Dorsolateral prefrontal cortex (tissue), 120 donors: ENCODE measurements at regions of chr11 and their contacts with region 1.

Region 1: GRCh38 chr11:83193315-83194280 is at the start of gene ANKRD42:
- DNase-seq: peak; percentile 90 to 97 (median 94)
- H3K4me3 ChIP-seq: peak within 1 kb of the TSS; percentile 63 to 100 (median 92)
- H3K27ac ChIP-seq: peak within 1 kb of the TSS in 58 of 59 donors; percentile 10 to 95 (median 83)
- H3K27me3 ChIP-seq: no peaks in the 10 kb centered on the region
- CTCF ChIP-seq: peak in 22 of 56 donors; percentile 1 to 51 (median 21)
- total RNA-seq, gene ANKRD42: 9.9 to 46.5 (median 32.4) TPM

Region 2: DNA sequence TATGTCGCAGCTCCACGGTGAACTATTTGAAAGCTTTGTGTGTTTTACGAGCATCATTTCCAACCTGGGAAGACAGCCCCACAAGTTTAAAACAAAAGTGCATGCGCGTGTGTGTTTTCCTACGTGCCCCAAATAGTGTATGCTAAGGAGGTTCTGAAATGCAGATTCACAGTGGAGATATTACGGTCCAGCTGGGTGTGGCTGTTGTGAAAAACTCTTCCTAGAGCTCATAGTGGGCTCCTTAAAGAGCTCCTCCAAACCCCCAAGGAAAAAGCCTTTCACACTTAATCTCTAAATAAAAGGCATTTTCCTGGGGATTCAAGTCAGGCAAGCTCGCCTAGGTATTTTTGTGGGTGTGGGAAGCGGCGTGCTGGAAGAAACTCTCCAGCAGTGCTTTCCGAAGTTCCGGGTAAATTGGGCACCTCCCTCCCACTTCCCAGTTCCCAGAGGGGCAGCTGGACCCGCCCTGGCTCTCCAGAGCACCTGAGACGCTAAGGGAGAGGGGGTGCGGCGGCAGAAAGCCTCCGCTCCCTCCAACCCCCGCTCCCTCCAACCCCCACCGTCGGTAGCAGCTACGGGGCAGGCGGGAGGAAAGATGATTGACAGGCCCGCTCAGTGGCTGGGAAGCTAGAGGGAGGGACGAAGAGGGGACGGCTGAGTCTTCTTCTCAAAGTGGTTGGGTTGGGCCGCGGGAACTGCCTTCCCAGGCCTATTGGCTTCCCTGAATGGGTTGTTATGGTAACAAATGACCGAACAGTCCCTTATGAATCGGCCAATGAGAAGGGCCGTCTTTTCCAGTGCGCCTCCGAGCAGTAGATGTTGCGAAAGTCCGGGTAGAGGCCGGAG is 37.2 kb before region 1 on chr11:
- intact Hi-C with region 1: loop called (anchors 2 to 5 kb)
- DNase-seq: peak in 5 of 10 donors; percentile 96 to 100 (median 99)
- H3K4me3 ChIP-seq: peak overlapping the region; percentile 48 to 100 (median 94)
- H3K27ac ChIP-seq: peak overlapping the region; percentile 35 to 100 (median 96)
- H3K27me3 ChIP-seq: no peaks in the 10 kb centered on the region
- CTCF ChIP-seq: peak in 11 of 56 donors; percentile 3 to 26 (median 11)

Region 3: GRCh38 chr11:83285771-83286528 is 92.4 kb after region 1 on chr11 and contains the start of gene CCDC90B:
- intact Hi-C with region 1: loop called in 1 of 2 experiments (anchors 2 kb)
- DNase-seq: peak; percentile 94 to 99 (median 97)
- H3K4me3 ChIP-seq: peak within 1 kb of the TSS; percentile 66 to 100 (median 93)
- H3K27ac ChIP-seq: peak within 1 kb of the TSS; percentile 89 to 100 (median 99)
- H3K27me3 ChIP-seq: no peaks in the 10 kb centered on the region
- CTCF ChIP-seq: peak in 46 of 56 donors; percentile 22 to 78 (median 58)
- total RNA-seq, gene CCDC90B: 25.8 to 63.1 (median 35.8) TPM